Posterior cingulate gyrus (tissue), 11 donors: ENCODE measurements at regions of chr20 and their contacts with region 1.

Region 1: GRCh38 chr20:62121776-62122631 is at the start of gene LSM14B:
- DNase-seq: peak; percentile 85 to 99 (median 93)

Region 2: GRCh38 chr20:62010551-62011402 is 111.2 kb before region 1 on chr20:
- intact Hi-C with region 1: loop called (anchors 5 kb)
- DNase-seq: peak in 9 of 10 donors; percentile 23 to 93 (median 67)

Region 3: GRCh38 chr20:62065669-62066338 is 56.2 kb before region 1 on chr20 and contains the start of gene TAF4:
- intact Hi-C with region 1: loop called (anchors 1 kb)
- DNase-seq: peak; percentile 59 to 96 (median 66)

Region 4: GRCh38 chr20:62133051-62133845 is 11.2 kb after region 1 on chr20:
- intact Hi-C with region 1: no loop called
- DNase-seq: peak in 2 of 10 donors; percentile 74 to 82

Region 5: DNA sequence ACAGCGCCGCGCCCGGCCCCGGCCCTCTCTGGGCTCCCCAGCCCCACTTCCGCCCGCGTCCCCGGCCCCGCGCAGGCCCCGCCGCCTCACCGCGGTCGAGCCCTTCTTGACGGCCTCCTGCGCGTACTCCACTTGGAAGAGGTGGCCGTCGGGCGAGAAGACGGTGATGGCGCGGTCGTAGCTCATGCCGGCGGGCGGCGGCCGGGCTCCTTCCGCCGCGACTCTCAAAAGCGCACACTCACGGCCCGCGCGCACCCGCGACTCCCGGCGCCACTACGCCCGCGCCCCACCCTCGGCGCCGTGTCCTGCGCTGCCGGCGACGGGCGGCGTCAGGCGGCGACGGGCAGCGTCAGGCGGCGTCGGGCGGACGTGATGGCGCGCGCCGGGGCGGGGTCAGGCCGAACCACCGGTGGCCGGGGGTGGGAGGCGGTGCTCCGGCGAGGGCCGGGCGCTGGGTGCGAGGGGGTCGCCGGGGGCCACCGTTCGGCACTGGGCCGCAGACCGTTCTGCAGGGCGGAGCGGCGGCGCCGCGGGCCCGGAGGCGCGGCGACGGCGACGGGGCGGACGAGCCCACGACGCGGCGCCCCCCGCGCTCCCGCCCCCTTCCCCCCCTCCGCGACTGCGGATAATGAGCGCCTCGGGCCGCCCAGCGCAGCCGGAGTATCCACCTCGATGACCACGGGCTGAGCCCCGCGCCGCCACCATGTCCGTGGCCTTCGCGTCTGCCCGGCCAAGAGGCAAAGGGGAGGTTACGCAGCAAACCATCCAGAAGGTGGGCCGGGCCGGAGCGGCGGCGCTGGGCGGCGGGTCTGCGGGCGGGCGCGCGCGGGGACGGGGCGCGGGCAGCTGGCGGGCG is 21.3 kb after region 1 on chr20 and contains the starts of genes PSMA7 and SS18L1:
- intact Hi-C with region 1: loop called (anchors 1 kb)
- DNase-seq: peak; percentile 73 to 98 (median 86)

Region 6: GRCh38 chr20:62237801-62238571 is 116.0 kb after region 1 on chr20 and contains the start of gene OSBPL2:
- intact Hi-C with region 1: loop called (anchors 10 kb)
- DNase-seq: peak; percentile 99 to 100 (median 100)

Region 7: DNA sequence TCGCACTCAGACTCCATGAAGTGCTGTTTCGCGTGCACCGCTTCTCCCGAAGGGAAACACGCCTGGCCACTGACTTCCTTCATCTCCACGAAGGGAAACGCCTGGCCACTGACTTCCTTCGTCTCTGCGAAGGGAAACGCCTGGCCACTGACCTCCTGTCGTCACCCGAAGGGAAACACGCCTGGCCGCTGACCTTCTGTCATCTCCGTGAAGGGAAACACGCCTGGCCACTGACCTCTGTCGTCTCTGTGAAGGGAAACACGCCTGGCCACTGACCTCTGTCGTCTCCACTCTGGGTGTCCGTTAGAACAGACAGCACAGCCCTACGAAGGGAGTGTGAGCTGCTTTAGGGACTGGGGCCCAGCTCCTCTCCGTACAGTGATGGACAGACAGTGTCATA is 163.7 kb after region 1 on chr20:
- intact Hi-C with region 1: no loop called
- DNase-seq: peak in 1 of 10 donors; percentile 71